MCF 10A (cell line): ENCODE measurements at regions of chr5 and their contacts with region 1.

Region 1: GRCh38 chr5:172454358-172455086 is at the start of gene SH3PXD2B:
- DNase-seq: peak; percentile 68
- H3K4me3 Mint-ChIP-seq: peak within 1 kb of the TSS; percentile 91
- H3K27ac Mint-ChIP-seq: peak within 1 kb of the TSS; percentile 90
- H3K4me1 Mint-ChIP-seq: peaks cover 44% of the 10 kb centered on the region
- H3K27me3 Mint-ChIP-seq: no peaks in the 10 kb centered on the region
- CTCF ChIP-seq: no peak
- total RNA-seq, gene SH3PXD2B: 34.1 and 42.3 TPM in 2 replicates

Region 2: DNA sequence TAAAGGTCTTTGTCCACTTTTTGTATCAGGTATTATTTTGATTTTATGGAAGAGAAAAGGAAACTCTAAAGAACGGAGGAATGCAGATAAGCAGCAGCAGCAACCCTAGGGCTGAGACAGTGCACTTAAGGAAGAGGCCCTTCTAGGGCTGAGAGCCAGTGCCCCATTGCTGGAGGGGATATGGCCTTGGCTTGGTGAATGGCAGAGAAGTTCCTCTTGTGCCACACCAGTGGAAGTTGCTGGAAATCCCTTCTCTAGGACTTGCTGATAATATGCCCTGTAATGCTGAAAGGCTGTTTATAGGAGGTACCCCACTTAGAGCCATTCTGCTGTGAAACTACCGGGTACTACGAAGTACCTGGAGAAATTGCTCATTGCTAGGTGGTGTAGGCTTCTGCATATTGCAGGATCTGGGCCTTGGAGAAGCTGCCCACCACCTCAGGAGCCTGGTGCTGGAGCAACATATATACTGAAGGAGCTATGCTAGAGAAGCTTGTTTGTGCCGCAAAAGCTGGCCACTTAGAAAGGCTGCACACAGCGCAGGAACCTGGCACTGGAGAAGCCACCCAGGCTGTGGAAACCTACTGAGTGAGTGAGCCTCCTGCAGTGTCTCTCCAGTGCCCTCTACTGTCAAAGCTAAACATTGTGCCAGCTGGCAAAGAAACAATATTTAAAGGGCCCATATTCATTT is 161.3 kb before region 1 on chr5:
- CTCF ChIA-PET with region 1: interaction called, 3 read pairs
- POLR2A ChIA-PET with region 1: no interaction called
- intact Hi-C with region 1: loop called (anchors 5 kb)
- DNase-seq: peak; percentile 87
- H3K4me3 Mint-ChIP-seq: no peak overlapping the region
- H3K27ac Mint-ChIP-seq: no peak overlapping the region
- H3K4me1 Mint-ChIP-seq: peaks cover 9% of the 10 kb centered on the region
- H3K27me3 Mint-ChIP-seq: peaks cover 12% of the 10 kb centered on the region
- CTCF ChIP-seq: peak; percentile 97

Region 3: DNA sequence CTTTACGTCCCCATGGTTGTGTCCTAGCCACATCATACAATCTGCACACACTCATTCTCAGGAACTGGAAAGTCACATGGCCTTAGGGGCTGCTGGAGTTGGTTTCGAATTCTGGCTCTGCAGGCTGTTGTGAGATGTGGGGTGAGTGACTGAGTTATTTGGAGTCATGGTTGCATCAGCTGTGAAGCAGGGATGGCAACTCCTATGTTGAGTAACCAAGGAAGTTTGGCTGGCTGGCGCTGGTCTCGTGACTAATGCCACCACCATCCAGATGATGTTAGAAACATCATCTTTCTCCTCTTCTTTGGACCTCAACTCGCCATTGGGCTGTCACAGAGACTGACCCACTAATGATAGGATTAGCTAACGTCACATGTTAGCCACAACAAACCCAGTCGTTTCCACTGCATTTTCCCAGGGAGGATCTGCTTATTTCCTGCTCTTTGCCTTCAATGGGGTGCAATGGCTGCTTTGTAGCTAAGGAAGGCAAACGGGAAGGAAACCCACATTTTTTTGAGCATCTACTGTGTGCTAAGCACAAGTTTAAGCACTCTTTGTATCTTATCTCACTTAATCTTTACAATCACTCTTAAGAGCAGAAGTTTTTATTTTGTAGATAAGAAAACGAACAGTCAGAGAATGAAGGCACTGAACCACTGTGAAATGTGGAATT is 92.8 kb before region 1 on chr5:
- CTCF ChIA-PET with region 1: interaction called, 10 read pairs
- POLR2A ChIA-PET with region 1: interaction called, 13 read pairs
- intact Hi-C with region 1: loop called (anchors 1 kb)
- DNase-seq: peak; percentile 100
- H3K4me3 Mint-ChIP-seq: peak overlapping the region; percentile 58
- H3K27ac Mint-ChIP-seq: peak overlapping the region; percentile 99
- H3K4me1 Mint-ChIP-seq: peaks cover 46% of the 10 kb centered on the region
- H3K27me3 Mint-ChIP-seq: no peaks in the 10 kb centered on the region
- CTCF ChIP-seq: no peak

Region 4: GRCh38 chr5:172402531-172403188 is 51.9 kb before region 1 on chr5:
- CTCF ChIA-PET with region 1: interaction called, 13 read pairs
- POLR2A ChIA-PET with region 1: interaction called, 13 read pairs
- intact Hi-C with region 1: no loop called
- DNase-seq: no peak
- H3K4me3 Mint-ChIP-seq: no peak overlapping the region
- H3K27ac Mint-ChIP-seq: no peak overlapping the region
- H3K4me1 Mint-ChIP-seq: peaks cover 26% of the 10 kb centered on the region
- H3K27me3 Mint-ChIP-seq: no peaks in the 10 kb centered on the region
- CTCF ChIP-seq: no peak

Region 5: DNA sequence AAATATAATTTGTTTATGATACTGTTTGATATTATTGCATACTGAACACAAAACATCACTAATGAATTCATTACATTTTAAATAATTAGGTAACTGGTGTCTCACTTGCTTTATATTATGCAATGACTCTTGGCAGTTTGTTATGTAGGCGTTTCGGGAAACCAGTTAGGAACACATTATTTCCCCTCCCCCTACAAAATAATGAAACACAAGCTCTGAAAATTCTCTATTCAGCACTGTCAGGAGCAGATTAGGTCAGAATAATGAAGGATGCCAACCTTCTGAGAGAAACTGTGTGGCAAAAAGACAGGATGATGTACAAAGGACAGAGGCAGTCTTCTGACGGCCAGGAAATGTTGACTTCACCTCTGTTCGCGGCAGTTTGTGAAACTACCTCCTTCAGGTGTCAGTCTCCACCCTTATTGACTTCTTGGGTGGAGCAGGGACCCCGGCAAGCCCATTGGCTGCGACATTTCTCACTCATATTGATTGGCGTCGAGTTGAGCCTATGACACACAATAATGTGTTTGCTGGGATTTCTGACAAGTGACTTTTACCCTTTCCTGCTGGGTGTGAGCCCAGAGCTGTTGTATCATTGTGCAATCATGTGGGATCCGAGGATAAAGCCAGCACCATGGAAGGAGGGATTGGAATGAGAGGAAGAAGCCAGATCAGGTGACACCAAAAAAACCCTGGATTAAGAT is 34.1 kb before region 1 on chr5:
- CTCF ChIA-PET with region 1: interaction called, 83 read pairs
- POLR2A ChIA-PET with region 1: interaction called, 305 read pairs
- intact Hi-C with region 1: loop called (anchors 1 kb)
- DNase-seq: peak; percentile 100
- H3K4me3 Mint-ChIP-seq: peak overlapping the region; percentile 73
- H3K27ac Mint-ChIP-seq: peak overlapping the region; percentile 80
- H3K4me1 Mint-ChIP-seq: peaks cover 50% of the 10 kb centered on the region
- H3K27me3 Mint-ChIP-seq: no peaks in the 10 kb centered on the region
- CTCF ChIP-seq: no peak

Region 6: GRCh38 chr5:172437445-172438308 is 16.8 kb before region 1 on chr5:
- CTCF ChIA-PET with region 1: interaction called, 147 read pairs
- POLR2A ChIA-PET with region 1: interaction called, 52 read pairs
- intact Hi-C with region 1: no loop called
- DNase-seq: peak; percentile 98
- H3K4me3 Mint-ChIP-seq: peak overlapping the region; percentile 39
- H3K27ac Mint-ChIP-seq: no peak overlapping the region
- H3K4me1 Mint-ChIP-seq: peaks cover 18% of the 10 kb centered on the region
- H3K27me3 Mint-ChIP-seq: no peaks in the 10 kb centered on the region
- CTCF ChIP-seq: no peak

Region 7: DNA sequence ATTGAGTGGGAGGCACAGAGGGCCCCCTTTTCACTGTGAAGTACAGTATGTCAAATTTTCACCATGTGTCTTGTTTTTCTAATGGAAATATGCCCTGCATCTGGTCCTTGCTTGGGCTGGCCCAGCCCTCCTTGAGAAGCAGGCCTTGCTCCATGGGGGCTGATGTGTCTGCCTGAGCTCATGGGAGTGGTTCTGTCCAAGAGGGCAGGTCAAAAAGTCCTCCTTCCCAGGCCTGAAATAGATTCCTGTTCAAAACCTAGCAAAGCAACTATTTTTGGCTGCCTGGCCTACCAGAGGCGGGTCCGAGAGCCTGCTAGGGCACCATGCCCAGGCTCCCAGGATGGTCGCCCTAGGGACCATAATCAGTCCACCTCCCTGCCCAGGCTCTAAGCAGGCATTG is 146.0 kb after region 1 on chr5:
- CTCF ChIA-PET with region 1: no interaction called
- POLR2A ChIA-PET with region 1: no interaction called
- intact Hi-C with region 1: no loop called
- DNase-seq: no peak
- H3K4me3 Mint-ChIP-seq: no peak overlapping the region
- H3K27ac Mint-ChIP-seq: no peak overlapping the region
- H3K4me1 Mint-ChIP-seq: peaks cover 5% of the 10 kb centered on the region
- H3K27me3 Mint-ChIP-seq: no peaks in the 10 kb centered on the region
- CTCF ChIP-seq: no peak

Region 8: DNA sequence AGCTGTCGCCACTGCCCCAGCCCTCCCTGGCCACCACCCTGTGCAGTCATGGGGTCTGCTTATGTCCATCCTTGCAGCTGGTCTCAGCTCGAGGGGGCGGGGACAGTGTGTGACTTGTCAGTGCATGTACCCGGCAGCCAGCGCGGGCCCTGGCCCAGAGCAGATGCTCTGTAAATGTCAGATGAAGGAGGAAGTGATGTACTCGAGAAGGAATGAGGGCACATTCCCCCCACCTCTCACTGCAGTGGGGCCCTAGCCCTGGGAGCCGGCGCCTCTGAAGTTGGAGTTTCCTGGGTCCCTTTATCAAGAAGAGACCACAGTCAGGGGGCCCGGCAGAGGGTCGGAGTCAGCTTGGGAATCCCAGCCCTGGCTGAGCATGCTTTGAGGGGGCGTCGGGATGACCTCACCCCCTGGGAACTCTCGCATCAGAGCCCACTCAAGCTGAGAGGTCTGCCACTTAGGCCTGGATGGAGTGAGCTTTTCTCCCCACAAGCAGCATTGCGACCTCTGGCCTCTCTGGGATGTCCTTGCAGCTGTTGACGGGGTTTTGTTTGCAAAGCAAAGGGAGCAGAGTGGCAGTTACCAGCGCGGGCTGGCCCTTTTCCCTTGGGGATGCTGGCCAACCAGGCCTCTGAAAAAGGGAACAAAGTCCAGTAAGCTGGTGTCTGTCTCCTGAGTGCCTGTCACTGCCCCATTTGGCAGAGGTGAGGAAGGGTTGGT is 205.5 kb after region 1 on chr5:
- CTCF ChIA-PET with region 1: no interaction called
- POLR2A ChIA-PET with region 1: no interaction called
- intact Hi-C with region 1: no loop called
- DNase-seq: no peak
- H3K4me3 Mint-ChIP-seq: no peak overlapping the region
- H3K27ac Mint-ChIP-seq: peak overlapping the region; percentile 3
- H3K4me1 Mint-ChIP-seq: peaks cover 15% of the 10 kb centered on the region
- H3K27me3 Mint-ChIP-seq: no peaks in the 10 kb centered on the region
- CTCF ChIP-seq: no peak

Region 9: GRCh38 chr5:172795318-172795977 is 340.9 kb after region 1 on chr5:
- CTCF ChIA-PET with region 1: no interaction called
- POLR2A ChIA-PET with region 1: interaction called, 10 read pairs
- intact Hi-C with region 1: no loop called
- DNase-seq: peak; percentile 96
- H3K4me3 Mint-ChIP-seq: peak overlapping the region; percentile 21
- H3K27ac Mint-ChIP-seq: peak overlapping the region; percentile 79
- H3K4me1 Mint-ChIP-seq: peaks cover 50% of the 10 kb centered on the region
- H3K27me3 Mint-ChIP-seq: no peaks in the 10 kb centered on the region
- CTCF ChIP-seq: no peak